Naive thymus-derived CD4-positive, alpha-beta T cell (primary cell): ENCODE measurements at regions of chr22 and their contacts with region 1.

Region 1: DNA sequence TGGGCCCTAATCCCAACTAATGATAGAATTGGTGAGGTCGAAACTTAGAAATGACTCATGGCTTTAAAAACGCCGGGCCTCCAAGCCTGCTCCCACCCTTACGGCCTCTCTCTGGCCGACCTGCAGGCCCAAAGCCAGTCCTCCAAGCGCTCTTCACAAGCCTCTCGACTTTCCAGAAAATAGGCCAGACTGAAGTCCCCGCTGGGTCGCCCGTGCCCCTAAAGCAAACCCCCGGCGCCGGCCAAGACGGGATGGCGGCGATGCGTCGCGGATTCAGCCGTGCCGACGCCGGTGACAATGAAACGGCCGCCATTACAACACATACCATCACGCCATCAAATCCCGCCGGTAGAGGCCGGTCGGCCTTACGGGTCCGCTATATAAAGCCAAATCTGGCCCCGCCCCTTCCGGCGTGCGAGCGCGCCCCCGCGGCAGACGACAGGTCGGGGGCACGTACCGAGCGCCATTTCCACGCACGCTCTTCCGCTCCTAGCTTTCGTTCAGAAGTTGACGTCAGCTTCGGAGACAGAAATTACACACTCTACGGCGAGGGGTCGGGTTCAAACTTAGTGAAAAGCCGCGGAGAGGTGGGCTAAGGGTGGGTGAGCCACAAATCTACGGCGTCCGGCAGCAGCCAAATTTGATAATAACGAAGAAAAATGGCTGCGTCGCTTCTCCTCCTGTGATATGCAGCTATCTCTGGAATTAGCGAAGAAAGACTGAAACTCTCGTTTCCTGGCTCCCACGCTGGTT is at the start of gene RPL3:
- DNase-seq: peak; percentile 97 to 99 (median 98)
- ATAC-seq: peak; percentile 93
- H3K4me3 ChIP-seq: peak within 1 kb of the TSS; percentile 81
- H3K4me3 Mint-ChIP-seq: peak within 1 kb of the TSS; percentile 95 to 100 (median 98)
- H3K27ac ChIP-seq: peak within 1 kb of the TSS; percentile 90
- H3K27ac Mint-ChIP-seq: peak within 1 kb of the TSS; percentile 95 to 99 (median 97)
- H3K4me1 ChIP-seq: peaks cover 34 to 39% of the 10 kb centered on the region in 2 donors
- H3K4me1 Mint-ChIP-seq: peaks cover 27 to 51% (median 35%) of the 10 kb centered on the region in 7 donors
- H3K27me3 ChIP-seq: no peaks in the 10 kb centered on the region
- H3K27me3 Mint-ChIP-seq: peaks cover 0 to 3% (median 0%) of the 10 kb centered on the region in 5 donors
- total RNA-seq, gene RPL3: 1,611 to 3,932 (median 3,789) TPM

Region 2: DNA sequence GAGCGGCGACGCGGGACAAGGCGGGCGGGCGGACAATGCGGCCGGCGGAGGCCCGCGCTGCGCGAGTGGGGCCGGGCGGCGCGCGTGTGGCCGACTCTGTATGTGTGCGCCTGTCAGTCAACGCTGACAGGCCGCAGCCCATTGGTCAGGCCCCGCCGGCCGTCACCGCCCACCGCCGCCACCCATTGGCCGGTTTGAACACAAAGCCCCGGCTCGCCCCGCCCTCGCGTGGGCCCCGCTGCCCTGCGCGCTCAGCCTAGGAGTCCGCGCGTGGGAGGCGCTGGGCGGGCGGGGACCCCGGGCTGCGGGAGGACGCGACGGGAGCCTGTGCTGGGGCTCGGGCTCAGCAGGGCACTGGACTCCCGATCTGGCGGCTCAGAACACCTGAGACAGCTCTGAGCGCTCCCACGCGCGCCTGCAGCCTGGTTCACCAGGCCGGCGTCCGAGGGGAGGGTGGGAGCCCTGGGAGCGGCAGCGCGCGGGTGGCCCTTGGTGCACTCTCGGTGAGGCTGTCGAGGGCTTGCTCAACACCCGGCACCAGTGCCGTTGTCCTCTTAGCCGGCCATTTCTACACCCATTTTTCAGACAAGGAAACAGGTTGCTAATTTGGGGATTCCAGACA is 563.4 kb before region 1 on chr22 and contains the start of gene SUN2:
- CTCF ChIA-PET with region 1: interaction called, 8 read pairs
- POLR2A ChIA-PET with region 1: interaction called, 5 read pairs
- intact Hi-C with region 1: loop called (anchors 5 to 10 kb)
- DNase-seq: peak; percentile 89 to 98 (median 92)
- ATAC-seq: peak; percentile 85
- H3K4me3 ChIP-seq: peak within 1 kb of the TSS; percentile 95
- H3K4me3 Mint-ChIP-seq: peak within 1 kb of the TSS; percentile 95 to 99 (median 96)
- H3K27ac ChIP-seq: peak within 1 kb of the TSS; percentile 81
- H3K27ac Mint-ChIP-seq: peak within 1 kb of the TSS; percentile 89 to 100 (median 99)
- H3K4me1 ChIP-seq: peaks cover 48 to 54% of the 10 kb centered on the region in 2 donors
- H3K4me1 Mint-ChIP-seq: peaks cover 42 to 67% (median 62%) of the 10 kb centered on the region in 7 donors
- H3K27me3 ChIP-seq: no peaks in the 10 kb centered on the region
- H3K27me3 Mint-ChIP-seq: no peaks in the 10 kb centered on the region
- total RNA-seq, gene SUN2: 509 to 977 (median 558) TPM

Region 3: DNA sequence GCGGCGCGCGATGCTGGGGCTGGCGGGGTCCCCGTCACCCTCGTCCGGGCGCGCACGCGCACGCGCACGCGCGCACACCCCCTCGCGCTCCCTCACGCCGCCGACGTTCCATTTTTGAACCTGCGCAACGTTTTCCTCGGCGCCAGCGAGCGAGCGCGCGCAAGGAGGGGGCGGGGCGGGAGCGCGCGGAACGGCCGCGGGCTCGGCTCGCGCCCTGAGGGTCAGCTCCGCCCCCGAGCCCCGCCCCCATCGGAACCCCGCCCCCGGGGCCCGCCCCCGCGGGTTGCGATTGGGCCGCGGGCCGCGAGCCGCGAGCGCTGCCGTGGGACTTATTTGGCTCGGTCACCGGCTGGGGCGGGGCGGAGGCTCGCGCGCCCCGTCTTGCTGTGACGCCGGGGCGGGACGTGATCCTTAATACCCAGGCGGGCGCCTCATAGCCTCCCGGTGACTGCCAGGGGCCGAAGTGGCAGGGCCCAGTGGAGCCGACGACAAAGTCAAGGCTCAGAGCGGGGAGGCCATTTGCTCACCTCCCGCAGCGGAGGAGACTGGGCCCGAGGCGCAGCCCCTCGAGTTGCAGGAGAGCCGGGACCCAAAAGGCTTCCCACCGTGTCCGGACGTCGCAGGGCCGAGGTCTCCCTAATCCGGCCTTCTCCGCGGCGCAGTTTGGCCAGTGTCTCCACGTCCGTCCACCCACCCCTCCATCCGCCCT is 166.8 kb before region 1 on chr22 and contains the start of gene CBX7:
- CTCF ChIA-PET with region 1: interaction called, 25 read pairs
- POLR2A ChIA-PET with region 1: interaction called, 4 read pairs
- intact Hi-C with region 1: loop called (anchors 1 kb)
- DNase-seq: peak; percentile 91 to 98 (median 94)
- ATAC-seq: peak; percentile 93
- H3K4me3 ChIP-seq: peak within 1 kb of the TSS; percentile 95
- H3K4me3 Mint-ChIP-seq: peak within 1 kb of the TSS; percentile 83 to 99 (median 92)
- H3K27ac ChIP-seq: peak within 1 kb of the TSS; percentile 89
- H3K27ac Mint-ChIP-seq: peak within 1 kb of the TSS; percentile 87 to 96 (median 91)
- H3K4me1 ChIP-seq: peaks cover 31 to 46% of the 10 kb centered on the region in 2 donors
- H3K4me1 Mint-ChIP-seq: peaks cover 7 to 41% (median 35%) of the 10 kb centered on the region in 7 donors
- H3K27me3 ChIP-seq: no peaks in the 10 kb centered on the region
- H3K27me3 Mint-ChIP-seq: peaks cover 0 to 41% (median 0%) of the 10 kb centered on the region in 5 donors
- total RNA-seq, gene CBX7: 14.2 to 164 (median 76.9) TPM

Region 4: DNA sequence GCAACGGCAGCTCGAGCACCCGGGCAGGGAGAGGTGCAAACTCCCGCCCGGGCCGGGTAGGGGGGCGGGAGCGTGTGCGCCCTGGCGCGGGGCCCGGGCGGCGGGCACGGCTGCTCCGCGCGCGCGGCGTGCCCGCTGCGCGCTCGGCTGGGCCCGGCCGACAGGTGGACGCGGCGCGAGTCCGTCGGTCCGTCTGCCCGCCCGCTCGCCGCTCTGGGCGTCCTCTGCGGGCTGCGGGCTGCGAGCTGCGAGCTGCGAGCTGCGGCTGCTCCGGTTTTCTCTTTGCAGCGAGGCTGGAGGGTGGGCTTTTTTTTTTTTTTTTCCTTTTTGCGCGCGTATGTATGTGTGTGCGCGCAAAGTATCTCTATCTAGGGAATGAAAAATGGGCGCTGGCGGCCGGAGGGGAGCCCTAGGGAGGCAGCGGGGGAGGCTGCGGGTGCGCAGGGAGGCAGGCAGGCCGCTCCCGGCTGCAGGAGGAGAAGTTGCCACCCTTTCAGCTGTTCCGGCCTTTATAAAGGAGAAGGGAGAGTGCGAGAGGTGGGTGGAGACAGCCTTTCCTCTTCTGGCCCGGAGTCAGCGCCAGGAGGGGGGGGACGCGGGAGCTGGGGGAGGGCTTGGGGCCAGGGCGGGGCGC is 74.8 kb before region 1 on chr22 and contains the start of gene PDGFB:
- CTCF ChIA-PET with region 1: no interaction called
- POLR2A ChIA-PET with region 1: interaction called, 80 read pairs
- intact Hi-C with region 1: loop called in 1 of 2 experiments (anchors 1 kb)
- DNase-seq: no peak
- ATAC-seq: no peak
- H3K4me3 ChIP-seq: peak within 1 kb of the TSS; percentile 47
- H3K4me3 Mint-ChIP-seq: peak within 1 kb of the TSS; percentile 74 to 97 (median 86)
- H3K27ac ChIP-seq: peak within 1 kb of the TSS; percentile 49
- H3K27ac Mint-ChIP-seq: peak within 1 kb of the TSS in 5 of 9 donors; percentile 12 to 81 (median 35)
- H3K4me1 ChIP-seq: peaks cover 28 to 32% of the 10 kb centered on the region in 2 donors
- H3K4me1 Mint-ChIP-seq: peaks cover 32 to 40% (median 39%) of the 10 kb centered on the region in 7 donors
- H3K27me3 ChIP-seq: peaks cover 0 to 4% of the 10 kb centered on the region in 2 donors
- H3K27me3 Mint-ChIP-seq: peaks cover 0 to 74% (median 29%) of the 10 kb centered on the region in 5 donors
- total RNA-seq, gene PDGFB: 0.56 to 9.5 (median 2.3) TPM

Region 5: DNA sequence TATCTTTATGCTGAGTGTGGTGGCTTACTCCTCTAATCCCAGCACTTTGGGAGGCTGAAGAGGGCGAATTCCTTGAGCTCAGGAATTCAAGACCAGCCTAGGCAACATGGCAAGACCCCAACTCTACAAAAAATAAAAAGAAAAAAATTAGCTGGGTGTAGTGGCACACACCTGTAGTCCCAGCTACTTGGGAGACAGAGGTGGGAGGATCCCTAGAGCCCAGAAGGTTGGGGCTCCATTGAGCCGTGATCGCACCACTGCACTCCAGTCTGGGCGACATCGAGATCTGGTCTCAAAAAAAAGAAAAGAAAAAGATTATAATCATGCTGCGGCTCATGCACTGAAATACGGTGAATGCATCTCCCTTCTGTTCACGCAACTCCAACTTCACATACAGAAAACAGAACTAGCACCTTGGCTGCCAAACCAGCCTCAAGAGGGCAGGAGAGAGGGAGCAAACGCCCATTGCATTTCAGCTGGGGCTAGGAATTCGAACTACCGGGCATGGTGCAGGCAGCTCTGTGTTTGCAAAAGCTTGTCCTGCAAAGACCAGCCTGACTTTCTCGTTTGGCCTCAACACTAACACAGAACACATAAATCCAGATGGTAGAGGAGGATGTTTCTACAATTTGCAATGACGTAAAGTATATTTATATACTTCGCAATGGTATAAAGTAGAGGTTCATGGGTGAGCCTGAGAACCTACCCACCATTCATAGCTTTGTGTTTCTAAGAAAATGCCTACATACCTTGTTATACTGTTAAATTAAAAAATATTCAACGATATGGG is 24.0 kb after region 1 on chr22:
- CTCF ChIA-PET with region 1: interaction called, 3 read pairs
- POLR2A ChIA-PET with region 1: interaction called, 16 read pairs
- intact Hi-C with region 1: loop called in 1 of 2 experiments (anchors 2 kb)
- DNase-seq: peak; percentile 25 to 69 (median 59)
- ATAC-seq: peak; percentile 85
- H3K4me3 ChIP-seq: no peak overlapping the region
- H3K4me3 Mint-ChIP-seq: no peak overlapping the region
- H3K27ac ChIP-seq: no peak overlapping the region
- H3K27ac Mint-ChIP-seq: no peak overlapping the region
- H3K4me1 ChIP-seq: no peaks in the 10 kb centered on the region
- H3K4me1 Mint-ChIP-seq: peaks cover 5 to 9% (median 6%) of the 10 kb centered on the region in 7 donors
- H3K27me3 ChIP-seq: no peaks in the 10 kb centered on the region
- H3K27me3 Mint-ChIP-seq: peaks cover 0 to 41% (median 3%) of the 10 kb centered on the region in 5 donors

Region 6: GRCh38 chr22:39395936-39396796 is 76.7 kb after region 1 on chr22:
- CTCF ChIA-PET with region 1: interaction called, 5 read pairs
- POLR2A ChIA-PET with region 1: interaction called, 5 read pairs
- intact Hi-C with region 1: loop called in 1 of 2 experiments (anchors 1 kb)
- DNase-seq: no peak
- ATAC-seq: no peak
- H3K4me3 ChIP-seq: no peak overlapping the region
- H3K4me3 Mint-ChIP-seq: peak overlapping the region in 1 of 10 donors; percentile 34
- H3K27ac ChIP-seq: no peak overlapping the region
- H3K27ac Mint-ChIP-seq: peak overlapping the region in 2 of 9 donors; percentile 5 to 6
- H3K4me1 ChIP-seq: peaks cover 6 to 9% of the 10 kb centered on the region in 2 donors
- H3K4me1 Mint-ChIP-seq: peaks cover 5 to 19% (median 11%) of the 10 kb centered on the region in 7 donors
- H3K27me3 ChIP-seq: no peaks in the 10 kb centered on the region
- H3K27me3 Mint-ChIP-seq: peaks cover 0 to 2% (median 0%) of the 10 kb centered on the region in 5 donors

Region 7: DNA sequence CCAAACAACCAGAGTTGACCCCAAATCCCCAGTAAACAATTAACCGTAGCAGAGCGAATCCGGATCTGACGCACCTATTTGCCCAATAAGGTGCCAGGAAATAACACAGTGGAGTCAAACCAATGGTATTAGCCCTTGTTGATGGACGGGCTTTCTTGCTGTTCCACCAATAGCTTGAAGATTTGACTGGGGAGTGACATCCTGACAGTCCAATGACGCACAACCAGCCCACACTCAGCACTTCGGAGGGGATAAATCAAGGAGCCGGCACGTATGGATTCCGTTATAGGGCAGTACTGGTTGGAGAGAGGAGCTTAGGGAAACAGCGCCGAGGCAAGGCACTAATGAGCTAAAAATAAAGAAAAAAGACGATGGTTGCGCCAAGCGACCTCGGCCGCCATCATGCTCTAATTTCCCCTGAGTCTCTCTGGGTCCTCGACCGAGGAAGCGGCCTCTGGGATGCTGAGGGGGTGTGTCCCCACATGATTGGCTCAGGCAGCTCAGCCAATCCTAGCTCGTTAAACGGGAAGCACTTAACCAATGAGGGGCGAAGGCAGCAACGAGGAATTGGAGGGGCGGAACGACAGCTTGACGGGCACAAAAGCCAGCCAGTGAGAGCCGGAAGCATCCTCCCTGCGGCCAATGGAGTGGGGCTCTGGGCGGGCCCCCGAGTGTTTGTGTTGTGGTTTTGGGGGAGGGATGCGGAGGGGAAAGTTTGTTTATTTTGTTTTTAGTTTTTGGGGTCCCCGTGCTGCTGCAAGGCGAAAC is 724.8 kb after region 1 on chr22:
- CTCF ChIA-PET with region 1: interaction called, 3 read pairs
- POLR2A ChIA-PET with region 1: interaction called, 17 read pairs
- intact Hi-C with region 1: loop called in 1 of 2 experiments (anchors 1 kb)
- DNase-seq: peak; percentile 87 to 100 (median 99)
- ATAC-seq: peak; percentile 92
- H3K4me3 ChIP-seq: peak overlapping the region; percentile 81
- H3K4me3 Mint-ChIP-seq: peak overlapping the region; percentile 94 to 99 (median 98)
- H3K27ac ChIP-seq: peak overlapping the region; percentile 88
- H3K27ac Mint-ChIP-seq: peak overlapping the region; percentile 98 to 100 (median 99)
- H3K4me1 ChIP-seq: peaks cover 15 to 29% of the 10 kb centered on the region in 2 donors
- H3K4me1 Mint-ChIP-seq: peaks cover 23 to 53% (median 40%) of the 10 kb centered on the region in 7 donors
- H3K27me3 ChIP-seq: no peaks in the 10 kb centered on the region
- H3K27me3 Mint-ChIP-seq: peaks cover 3 to 17% (median 7%) of the 10 kb centered on the region in 5 donors